ENCODE measurements at regions of chr16 and their contacts with region 1.

Region 1: DNA sequence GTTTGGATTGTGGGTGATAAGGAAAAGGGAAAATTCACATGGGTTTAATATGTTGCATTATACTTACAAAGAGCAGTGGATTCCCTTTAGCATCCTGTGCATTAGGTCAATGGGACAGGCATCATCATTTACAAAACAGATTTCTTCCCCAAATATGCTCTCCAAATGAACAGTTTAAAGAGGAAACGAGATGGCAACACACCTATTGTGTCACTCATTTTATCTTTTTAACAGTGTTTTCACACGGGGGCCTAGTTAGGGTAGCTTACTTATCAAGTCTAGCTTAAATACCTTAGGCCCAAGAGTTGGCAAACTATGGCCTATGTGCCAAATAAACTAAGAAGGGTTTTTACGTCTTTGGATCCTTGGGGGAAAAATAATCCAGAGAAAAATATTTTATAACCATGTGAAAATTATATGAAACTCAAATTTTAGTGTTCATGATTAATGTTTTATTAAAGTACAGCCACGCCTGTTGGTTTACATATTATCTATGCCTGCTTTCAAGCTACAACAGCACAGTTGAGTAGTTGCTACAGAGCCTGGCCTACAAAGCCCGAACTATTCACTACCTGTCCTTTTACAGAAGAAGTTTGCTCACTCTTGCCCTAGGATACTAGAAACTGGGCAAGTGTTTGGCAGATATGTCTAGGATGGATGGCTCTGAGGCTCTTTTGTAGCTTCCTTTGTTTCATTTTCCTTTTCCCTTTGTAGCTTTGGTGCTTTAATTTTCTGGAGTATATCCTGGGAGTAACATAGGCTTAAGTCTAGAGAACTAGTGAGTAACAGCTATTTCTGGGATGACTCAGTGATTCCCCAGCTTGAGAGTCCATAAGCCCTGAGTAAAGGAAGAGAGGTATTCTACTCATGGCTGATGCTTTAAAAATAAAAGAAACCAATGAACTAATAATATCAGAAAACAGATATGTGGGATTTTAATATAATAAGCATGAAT is 12.4 kb downstream of the NUP93 start:
- DNase-seq: no peak
- H3K4me3 ChIP-seq: no peak overlapping the region
- H3K27ac ChIP-seq: peak overlapping the region; percentile 38 to 65 (median 56)
- H3K4me1 ChIP-seq: peaks cover 29 to 54% (median 35%) of the 10 kb centered on the region in 4 donors
- H3K27me3 ChIP-seq: no peaks in the 10 kb centered on the region
- CTCF ChIP-seq: no peak
- EP300 ChIP-seq: no peak
- POLR2A ChIP-seq: no peak

Region 2: DNA sequence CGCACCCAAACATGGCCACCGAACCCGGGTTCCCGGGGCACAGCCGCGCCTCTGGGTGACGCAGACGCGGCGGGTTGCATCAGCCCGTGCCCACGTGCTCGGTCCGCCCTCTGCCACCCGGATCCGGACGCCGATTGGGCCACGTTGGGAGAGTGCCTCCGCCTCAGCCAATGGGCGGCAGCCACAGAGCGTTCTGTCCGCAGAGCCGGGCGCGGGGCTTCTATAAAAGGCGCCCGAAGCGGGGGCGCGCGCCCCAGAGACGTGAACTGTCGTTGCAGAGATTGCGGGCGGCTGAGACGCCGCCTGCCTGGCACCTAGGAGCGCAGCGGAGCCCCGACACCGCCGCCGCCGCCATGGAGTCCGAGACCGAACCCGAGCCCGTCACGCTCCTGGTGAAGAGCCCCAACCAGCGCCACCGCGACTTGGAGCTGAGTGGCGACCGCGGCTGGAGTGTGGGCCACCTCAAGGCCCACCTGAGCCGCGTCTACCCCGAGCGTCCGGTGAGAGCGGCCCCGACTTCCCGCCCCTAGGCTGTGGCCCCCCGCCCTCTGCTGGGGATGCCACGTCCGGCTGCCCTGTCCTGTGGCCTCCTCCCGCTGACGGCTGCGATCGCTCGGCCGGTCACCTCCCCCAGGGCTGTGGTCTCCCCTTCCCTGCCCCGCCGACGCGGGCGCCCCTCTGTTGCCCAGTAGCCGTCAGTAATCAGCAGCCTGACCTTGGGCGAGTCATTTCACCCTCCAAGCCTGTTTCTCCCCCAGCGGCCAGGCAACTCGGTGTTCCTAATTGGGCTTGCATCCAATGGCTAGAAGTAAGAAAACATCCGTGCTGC is 189.8 kb after region 1 on chr16 and contains the start of gene HERPUD1:
- intact Hi-C with region 1: loop called (anchors 10 kb)
- DNase-seq: peak; percentile 100
- H3K4me3 ChIP-seq: peak within 1 kb of the TSS; percentile 78 to 99 (median 85)
- H3K27ac ChIP-seq: peak within 1 kb of the TSS; percentile 97 to 100 (median 98)
- H3K4me1 ChIP-seq: peaks cover 43 to 53% (median 48%) of the 10 kb centered on the region in 4 donors
- H3K27me3 ChIP-seq: no peaks in the 10 kb centered on the region
- CTCF ChIP-seq: no peak
- EP300 ChIP-seq: no peak
- POLR2A ChIP-seq: peak; percentile 82
- total RNA-seq, gene HERPUD1: 64.0 to 99.7 (median 71.5) TPM